ENCODE measurements at regions of chr17 and their contacts with region 1.

Region 1: GRCh38 chr17:48047741-48048383 is at the start of gene NFE2L1:
- DNase-seq: peak; percentile 100
- ATAC-seq: peak; percentile 97
- H3K4me3 Mint-ChIP-seq: peak within 1 kb of the TSS; percentile 97
- H3K27ac Mint-ChIP-seq: peak within 1 kb of the TSS; percentile 95
- H3K4me1 Mint-ChIP-seq: peaks cover 56% of the 10 kb centered on the region
- H3K27me3 Mint-ChIP-seq: no peaks in the 10 kb centered on the region
- total RNA-seq, gene NFE2L1: 44.1 to 50.7 TPM

Region 2: GRCh38 chr17:48037036-48037837 is 10.6 kb before region 1 on chr17 and contains the start of gene COPZ2:
- CTCF ChIA-PET with region 1: interaction called, 29 read pairs
- POLR2A ChIA-PET with region 1: interaction called, 5 read pairs
- DNase-seq: peak; percentile 72
- ATAC-seq: peak; percentile 89
- H3K4me3 Mint-ChIP-seq: peak within 1 kb of the TSS; percentile 76
- H3K27ac Mint-ChIP-seq: peak within 1 kb of the TSS; percentile 53
- H3K4me1 Mint-ChIP-seq: peaks cover 15% of the 10 kb centered on the region
- H3K27me3 Mint-ChIP-seq: peaks cover 39% of the 10 kb centered on the region
- total RNA-seq, gene COPZ2: 5.1 to 5.5 TPM

Region 3: DNA sequence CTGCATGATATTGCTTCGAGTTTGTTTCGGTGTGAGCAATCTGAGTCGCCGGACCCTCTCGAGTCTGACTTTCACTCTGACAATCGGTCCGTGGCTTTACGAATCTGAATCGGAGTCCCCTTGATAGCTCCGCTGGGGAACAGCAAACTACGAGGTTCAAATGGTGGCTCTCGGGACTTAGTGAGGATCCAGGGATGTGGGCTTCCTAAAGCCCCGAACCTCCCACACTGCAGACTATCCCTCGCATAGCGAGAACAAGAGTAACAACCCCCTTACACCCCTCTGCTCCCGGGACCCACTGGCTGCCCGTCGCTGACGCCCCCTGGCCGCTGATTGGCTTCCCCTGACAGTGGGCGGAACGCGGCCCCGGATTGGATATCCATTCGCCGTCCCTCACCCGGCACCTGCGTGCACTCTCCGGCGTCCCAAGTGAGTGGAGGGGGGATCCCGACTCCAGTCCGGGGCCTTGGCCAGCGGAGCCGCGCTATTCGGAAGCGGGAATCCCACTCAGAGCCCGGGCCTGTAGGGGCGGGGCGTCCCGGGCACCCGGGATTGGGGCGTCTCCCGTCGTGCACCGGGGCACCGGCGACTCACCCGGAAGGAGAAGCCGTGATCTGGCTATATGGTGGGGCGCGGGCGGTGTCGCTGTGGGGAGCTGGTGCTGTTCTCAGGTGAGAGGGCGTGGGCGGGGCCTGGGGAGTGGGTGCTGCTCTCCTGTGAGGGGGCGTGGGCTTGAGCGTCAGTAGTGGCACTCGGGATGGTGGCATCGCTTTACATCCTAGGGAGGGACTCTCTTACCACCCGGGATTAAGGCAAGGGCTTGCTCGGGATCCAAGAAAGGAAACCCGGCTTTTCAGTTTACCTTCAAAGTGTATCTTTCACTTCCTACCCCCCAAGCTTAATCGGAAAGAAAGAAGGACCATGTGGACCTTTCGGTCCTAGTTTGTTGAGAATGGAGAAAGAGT is 59.6 kb after region 1 on chr17 and contains the start of gene SNX11:
- CTCF ChIA-PET with region 1: interaction called, 4 read pairs
- POLR2A ChIA-PET with region 1: interaction called, 17 read pairs
- DNase-seq: peak; percentile 94
- ATAC-seq: peak; percentile 95
- H3K4me3 Mint-ChIP-seq: peak within 1 kb of the TSS; percentile 99
- H3K27ac Mint-ChIP-seq: peak within 1 kb of the TSS; percentile 98
- H3K4me1 Mint-ChIP-seq: peaks cover 67% of the 10 kb centered on the region
- H3K27me3 Mint-ChIP-seq: no peaks in the 10 kb centered on the region
- total RNA-seq, gene SNX11: 33.3 to 34.2 TPM